Activated CD4-positive, alpha-beta memory T cell treated with anti-CD3 and anti-CD28 coated beads for 36 hours (primary cell): ENCODE measurements at regions of chr6 and their contacts with region 1.

Region 1: GRCh38 chr6:150395398-150396009 is 26.7 kb downstream of the IYD start:
- DNase-seq: peak; percentile 46
- H3K4me3 Mint-ChIP-seq: no peak overlapping the region
- H3K27ac Mint-ChIP-seq: no peak overlapping the region
- H3K4me1 Mint-ChIP-seq: no peaks in the 10 kb centered on the region
- H3K27me3 Mint-ChIP-seq: peaks cover 8% of the 10 kb centered on the region

Region 2: DNA sequence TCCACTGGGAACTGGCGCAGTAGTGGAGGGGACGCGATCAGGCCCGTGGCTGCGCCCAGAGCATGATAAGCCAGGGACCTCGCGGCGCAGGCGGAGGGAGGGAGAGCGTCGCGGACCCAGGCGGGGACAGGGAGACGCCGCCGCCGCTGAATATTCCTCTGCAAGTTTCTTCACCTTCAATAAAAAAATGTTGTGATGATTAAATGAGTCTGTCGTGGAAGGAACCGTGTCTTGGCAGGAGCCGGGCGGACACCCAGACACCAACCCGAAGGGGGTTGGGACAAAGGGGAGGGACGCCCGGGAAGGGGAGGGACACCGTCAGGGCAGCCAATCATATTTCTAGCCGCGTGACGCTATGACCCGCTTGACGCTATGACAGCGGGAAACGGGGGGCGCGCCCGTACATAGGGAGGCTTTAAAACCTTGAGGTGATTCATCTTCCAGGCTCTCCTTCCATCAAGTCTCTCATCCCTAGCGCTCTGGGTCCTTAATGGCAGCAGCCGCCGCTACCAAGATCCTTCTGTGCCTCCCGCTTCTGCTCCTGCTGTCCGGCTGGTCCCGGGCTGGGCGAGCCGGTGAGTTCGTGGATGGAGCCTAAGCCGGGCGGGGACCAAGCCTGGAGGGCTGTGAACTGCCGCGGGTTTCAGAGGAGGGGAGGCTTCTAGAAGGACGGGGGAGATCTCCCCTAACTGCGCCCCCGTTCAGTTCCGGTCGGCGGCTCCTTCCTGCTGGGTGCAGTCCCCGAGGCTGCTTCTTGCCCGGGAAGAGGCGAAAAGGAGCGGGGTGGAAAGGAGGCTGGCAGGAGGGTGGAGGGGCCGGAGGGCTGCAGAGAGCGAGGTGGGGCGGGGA is 453.7 kb before region 1 on chr6 and contains the start of gene ULBP2:
- CTCF ChIA-PET with region 1: no interaction called
- POLR2A ChIA-PET with region 1: no interaction called
- intact Hi-C with region 1: loop called (anchors 5 kb)
- DNase-seq: peak; percentile 94
- H3K4me3 Mint-ChIP-seq: peak within 1 kb of the TSS; percentile 85
- H3K27ac Mint-ChIP-seq: peak within 1 kb of the TSS; percentile 75
- H3K4me1 Mint-ChIP-seq: peaks cover 37% of the 10 kb centered on the region
- H3K27me3 Mint-ChIP-seq: peaks cover 47% of the 10 kb centered on the region
- total RNA-seq, gene ULBP2: 0.90 to 1.2 TPM

Region 3: DNA sequence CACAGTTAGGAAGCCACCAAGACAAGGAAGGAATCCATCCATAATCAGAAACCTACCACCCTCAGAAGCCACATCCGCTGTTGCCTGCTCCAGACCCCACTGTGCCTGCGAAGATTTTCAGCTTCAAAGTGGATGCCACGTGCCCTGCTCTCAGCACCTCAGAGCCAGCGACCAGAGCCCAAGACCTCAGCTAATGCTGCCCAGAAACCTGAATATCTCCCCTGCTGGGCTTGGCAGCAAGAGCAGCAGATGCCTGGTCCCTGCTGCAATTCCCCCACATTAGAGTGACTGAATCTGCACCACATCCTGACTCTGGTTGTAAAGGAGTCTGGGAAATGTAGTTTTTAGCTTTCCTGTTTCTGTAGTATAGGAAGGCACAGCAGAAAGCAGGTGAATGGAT is 315.9 kb before region 1 on chr6:
- CTCF ChIA-PET with region 1: interaction called, 139 read pairs
- POLR2A ChIA-PET with region 1: no interaction called
- intact Hi-C with region 1: loop called (anchors 1 kb)
- DNase-seq: peak; percentile 45
- H3K4me3 Mint-ChIP-seq: no peak overlapping the region
- H3K27ac Mint-ChIP-seq: no peak overlapping the region
- H3K4me1 Mint-ChIP-seq: peaks cover 17% of the 10 kb centered on the region
- H3K27me3 Mint-ChIP-seq: peaks cover 29% of the 10 kb centered on the region

Region 4: DNA sequence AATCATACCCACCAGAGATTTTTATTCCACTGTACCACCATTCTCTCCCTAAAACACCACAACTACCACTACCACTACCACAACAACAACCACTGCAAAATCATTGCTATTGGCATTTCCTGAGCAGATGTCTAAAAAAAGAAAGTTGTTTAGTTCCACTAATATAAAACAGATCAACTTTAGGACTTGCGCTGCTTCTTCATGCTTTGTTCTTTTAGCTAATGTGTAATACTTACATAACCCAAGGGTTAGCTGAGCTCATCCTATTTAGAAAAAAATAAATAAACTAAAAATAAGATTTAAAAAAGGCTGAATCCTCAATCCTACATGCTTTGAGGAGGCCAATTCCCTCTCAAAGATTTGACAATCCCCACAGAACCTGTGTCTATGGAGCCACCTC is 15.2 kb before region 1 on chr6:
- CTCF ChIA-PET with region 1: interaction called, 26 read pairs
- POLR2A ChIA-PET with region 1: interaction called, 3 read pairs
- intact Hi-C with region 1: no loop called
- DNase-seq: no peak
- H3K4me3 Mint-ChIP-seq: no peak overlapping the region
- H3K27ac Mint-ChIP-seq: no peak overlapping the region
- H3K4me1 Mint-ChIP-seq: no peaks in the 10 kb centered on the region
- H3K27me3 Mint-ChIP-seq: peaks cover 20% of the 10 kb centered on the region

Region 5: DNA sequence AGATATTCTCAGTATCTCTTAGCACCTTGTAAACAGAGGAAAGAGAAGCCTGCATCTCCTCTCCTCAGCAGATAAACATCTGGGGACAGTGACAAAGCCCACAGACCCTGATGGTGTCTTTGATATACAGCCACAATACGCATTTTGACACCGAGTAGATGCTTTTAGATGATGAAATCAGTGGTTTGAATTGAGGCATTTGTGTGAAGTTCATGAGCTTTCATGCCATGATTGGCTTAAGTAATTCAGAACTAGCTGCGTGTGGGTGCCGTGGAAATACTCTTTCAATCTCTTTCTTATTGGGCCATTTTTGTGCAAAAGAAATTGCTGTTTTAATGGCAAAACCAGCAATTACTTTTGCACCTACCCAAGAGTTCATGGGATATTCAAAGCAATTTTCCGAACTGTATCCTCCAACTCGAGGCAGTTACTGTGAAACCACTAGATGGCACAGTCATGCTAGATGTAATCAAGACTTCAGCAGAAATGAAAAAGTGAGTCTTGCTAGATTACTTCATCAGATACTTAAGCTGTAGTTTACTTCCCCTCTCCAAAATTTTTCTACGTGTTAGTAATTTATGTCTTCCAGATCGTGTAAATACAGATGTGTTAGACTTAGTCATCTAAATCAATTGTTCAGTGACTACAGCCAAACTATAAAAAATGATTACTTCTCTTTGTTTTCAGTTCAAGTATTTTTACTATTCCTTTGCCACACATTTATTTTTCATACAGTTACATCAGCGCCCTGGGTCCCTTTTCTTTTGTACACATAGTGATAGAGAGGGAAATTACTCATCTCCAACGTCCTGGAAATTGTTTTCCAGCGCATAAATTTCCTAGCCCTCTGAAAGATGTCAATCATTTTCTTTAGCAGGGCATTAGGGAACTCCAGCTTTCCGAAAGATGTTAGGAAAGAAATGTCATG is 22.7 kb after region 1 on chr6:
- CTCF ChIA-PET with region 1: interaction called, 19 read pairs
- POLR2A ChIA-PET with region 1: no interaction called
- intact Hi-C with region 1: no loop called
- DNase-seq: peak; percentile 28
- H3K4me3 Mint-ChIP-seq: peak overlapping the region; percentile 50
- H3K27ac Mint-ChIP-seq: peak overlapping the region; percentile 67
- H3K4me1 Mint-ChIP-seq: peaks cover 30% of the 10 kb centered on the region
- H3K27me3 Mint-ChIP-seq: peaks cover 24% of the 10 kb centered on the region

Region 6: GRCh38 chr6:150435832-150436231 is 40.3 kb after region 1 on chr6:
- CTCF ChIA-PET with region 1: no interaction called
- POLR2A ChIA-PET with region 1: no interaction called
- intact Hi-C with region 1: no loop called
- DNase-seq: no peak
- H3K4me3 Mint-ChIP-seq: no peak overlapping the region
- H3K27ac Mint-ChIP-seq: no peak overlapping the region
- H3K4me1 Mint-ChIP-seq: no peaks in the 10 kb centered on the region
- H3K27me3 Mint-ChIP-seq: no peaks in the 10 kb centered on the region

Region 7: GRCh38 chr6:150482883-150483409 is 87.4 kb after region 1 on chr6:
- CTCF ChIA-PET with region 1: no interaction called
- POLR2A ChIA-PET with region 1: no interaction called
- intact Hi-C with region 1: no loop called
- DNase-seq: no peak
- H3K4me3 Mint-ChIP-seq: no peak overlapping the region
- H3K27ac Mint-ChIP-seq: no peak overlapping the region
- H3K4me1 Mint-ChIP-seq: no peaks in the 10 kb centered on the region
- H3K27me3 Mint-ChIP-seq: peaks cover 3% of the 10 kb centered on the region

Region 8: DNA sequence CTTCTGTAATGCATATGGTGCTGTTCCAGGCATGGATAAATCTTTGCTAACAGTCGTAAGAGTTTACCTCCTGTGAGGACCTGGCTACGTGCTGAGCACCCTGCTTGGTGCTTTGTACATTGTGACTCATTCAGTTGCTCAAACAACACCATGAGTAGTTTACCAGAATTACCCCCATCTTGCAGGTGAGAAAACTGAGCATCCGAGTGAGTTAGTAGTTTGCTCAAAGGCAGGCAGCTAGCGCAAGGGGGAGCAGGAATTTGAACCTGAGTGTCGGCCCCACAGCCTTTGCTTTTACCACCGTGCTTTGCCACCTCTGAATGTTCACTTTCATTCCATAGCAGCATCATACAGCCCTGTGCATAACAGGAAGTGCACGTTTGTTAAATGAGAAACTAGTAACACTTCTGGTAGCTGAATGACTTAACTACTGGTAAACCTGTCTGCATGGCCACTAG is 591.9 kb after region 1 on chr6:
- CTCF ChIA-PET with region 1: no interaction called
- POLR2A ChIA-PET with region 1: no interaction called
- intact Hi-C with region 1: no loop called
- DNase-seq: peak; percentile 83
- H3K4me3 Mint-ChIP-seq: peak overlapping the region; percentile 55
- H3K27ac Mint-ChIP-seq: peak overlapping the region; percentile 96
- H3K4me1 Mint-ChIP-seq: peaks cover 13% of the 10 kb centered on the region
- H3K27me3 Mint-ChIP-seq: no peaks in the 10 kb centered on the region